Lower leg skin (tissue), 4 donors: ENCODE measurements at regions of chr12 and their contacts with region 1.

Region 1: DNA sequence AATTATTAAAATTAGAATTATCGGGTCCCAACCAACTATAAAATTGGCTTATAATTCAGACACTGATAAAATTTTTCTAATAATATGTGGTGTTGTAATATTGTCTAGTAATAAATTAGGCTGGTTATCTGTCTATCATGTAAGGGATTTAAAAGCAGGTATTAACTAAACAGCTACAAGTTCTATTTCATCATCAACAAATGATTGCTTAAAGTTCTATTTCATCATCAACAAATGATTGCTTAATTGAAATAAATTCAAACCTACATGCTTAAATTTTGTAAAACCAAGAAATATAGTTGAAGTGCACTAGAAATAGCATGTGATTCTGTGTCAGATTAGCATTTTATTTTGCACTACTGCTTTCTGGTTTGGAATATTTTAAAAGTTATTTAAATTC is 34.1 kb downstream of the SLCO1A2 start:
- DNase-seq: no peak
- H3K4me3 ChIP-seq: no peak overlapping the region
- CTCF ChIP-seq: no peak
- POLR2A ChIP-seq: no peak

Region 2: DNA sequence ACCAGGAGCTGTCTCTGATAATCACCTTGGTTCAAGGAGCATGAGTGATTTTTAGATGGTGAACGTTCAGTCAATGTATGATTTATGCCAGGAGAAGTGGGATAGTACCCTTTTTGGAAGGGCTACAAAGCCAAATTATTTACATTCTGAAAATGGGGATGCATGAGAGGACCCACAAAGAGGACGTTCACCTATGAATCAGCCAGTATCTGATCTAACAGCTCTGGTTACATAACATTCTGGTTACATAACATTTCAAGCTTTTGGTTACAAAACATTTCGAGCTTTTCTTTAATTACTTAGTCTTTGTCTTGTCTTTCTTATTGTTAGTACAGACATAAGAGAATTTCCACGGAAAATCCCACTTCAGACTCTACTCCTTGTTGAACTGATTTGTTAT is 34.7 kb before region 1 on chr12:
- intact Hi-C with region 1: no loop called
- DNase-seq: no peak
- H3K4me3 ChIP-seq: no peak overlapping the region
- CTCF ChIP-seq: no peak
- POLR2A ChIP-seq: no peak

Region 3: DNA sequence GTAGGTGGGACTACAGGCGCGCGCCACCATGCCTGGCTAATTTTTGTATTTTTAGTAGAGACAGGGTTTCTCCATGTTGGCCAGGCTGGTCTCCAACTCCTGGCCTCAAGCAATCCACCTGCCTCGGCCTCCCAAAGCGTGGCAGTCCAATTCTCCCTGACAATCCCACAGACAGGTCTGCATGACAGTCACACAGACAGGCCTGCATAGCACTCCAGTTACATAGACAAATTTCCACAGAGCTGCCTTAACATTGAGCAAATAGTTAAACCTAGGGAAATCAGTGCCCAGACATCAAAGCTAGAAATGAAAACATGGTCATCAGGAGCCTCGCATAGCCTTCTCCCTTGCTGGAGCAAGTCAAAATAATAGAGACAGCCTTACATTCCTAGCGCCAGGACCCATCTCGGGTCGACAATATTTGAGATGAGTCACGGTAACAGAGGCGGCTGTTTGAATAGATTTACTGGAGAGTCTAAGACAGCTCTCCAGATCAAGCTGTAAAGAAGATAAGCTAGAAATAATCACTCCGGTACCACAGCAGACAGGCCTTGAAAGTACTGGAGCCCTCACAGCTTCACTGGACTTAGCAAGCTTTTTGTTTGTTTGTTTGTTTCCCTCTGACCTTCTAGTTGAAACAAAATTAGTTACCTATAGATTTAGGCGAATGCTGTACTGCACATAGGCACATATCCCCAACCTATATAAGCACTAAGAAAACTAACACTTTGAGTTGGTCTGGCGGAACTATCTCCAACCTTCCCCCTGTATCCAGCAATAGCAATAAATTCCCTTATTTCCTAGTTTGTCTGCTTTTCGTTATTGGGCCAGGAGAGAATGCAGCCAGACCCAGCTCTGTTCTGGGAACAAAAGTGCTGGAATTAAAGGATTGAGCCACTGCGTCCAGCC is 113.0 kb after region 1 on chr12:
- intact Hi-C with region 1: loop called (anchors 5 kb)
- DNase-seq: no peak
- H3K4me3 ChIP-seq: no peak overlapping the region
- CTCF ChIP-seq: no peak
- POLR2A ChIP-seq: no peak